ENCODE measurements at regions of chr20 and their contacts with region 1.

Region 1: GRCh38 chr20:25178563-25179438 is 16.7 kb upstream of the ENTPD6 start:
- DNase-seq: peak; percentile 63
- CTCF ChIP-seq: peak; percentile 79

Region 2: GRCh38 chr20:24131281-24131680 is 1047.5 kb before region 1 on chr20:
- in situ Hi-C with region 1: no loop called
- DNase-seq: no peak
- CTCF ChIP-seq: no peak

Region 3: DNA sequence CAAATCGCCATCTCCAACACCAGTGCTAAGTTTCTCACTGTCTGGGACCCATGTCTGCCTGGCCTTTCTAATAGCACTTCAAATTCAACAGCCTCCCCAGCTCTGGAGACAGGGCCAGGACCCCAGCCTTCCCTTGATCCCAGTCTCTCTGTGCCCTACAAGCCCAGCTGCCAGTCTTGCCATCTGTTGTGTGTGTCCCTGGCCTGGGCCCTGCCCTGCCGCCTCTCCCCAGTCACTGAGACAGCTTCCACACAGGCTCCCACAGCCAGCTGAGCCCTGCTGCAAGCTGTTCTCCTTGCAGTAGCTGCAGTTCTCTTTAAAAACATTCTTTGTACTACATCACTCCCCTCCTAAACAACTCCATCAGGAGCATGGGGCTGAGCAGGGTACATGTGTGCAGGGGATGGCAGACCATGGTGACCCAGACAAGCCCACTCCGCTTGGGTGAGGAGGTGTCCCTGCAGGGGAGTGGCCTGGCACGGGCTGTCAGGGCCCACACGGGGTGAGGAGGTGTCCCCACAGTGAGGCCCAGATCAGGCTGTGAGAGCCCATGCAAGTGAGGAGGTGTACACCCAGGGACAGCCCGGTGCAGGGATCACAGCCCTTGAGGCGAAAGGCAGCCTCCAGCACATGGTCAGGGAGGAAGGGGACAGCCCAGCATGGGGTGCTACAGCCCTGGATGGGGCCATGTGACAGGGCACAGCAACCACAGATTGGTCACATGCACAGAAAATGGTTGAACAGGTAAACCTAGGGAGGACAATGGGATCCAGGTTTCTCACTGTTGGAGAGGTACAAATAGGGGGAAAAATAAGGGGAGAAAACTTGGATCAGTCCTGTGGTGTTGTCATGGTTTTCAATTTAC is 213.5 kb before region 1 on chr20:
- in situ Hi-C with region 1: no loop called
- DNase-seq: no peak
- CTCF ChIP-seq: no peak

Region 4: GRCh38 chr20:25076731-25077609 is 101.8 kb before region 1 on chr20:
- in situ Hi-C with region 1: loop called (anchors 10 kb)
- DNase-seq: no peak
- CTCF ChIP-seq: no peak